ENCODE measurements at regions of chr5 and their contacts with region 1.

Region 1: DNA sequence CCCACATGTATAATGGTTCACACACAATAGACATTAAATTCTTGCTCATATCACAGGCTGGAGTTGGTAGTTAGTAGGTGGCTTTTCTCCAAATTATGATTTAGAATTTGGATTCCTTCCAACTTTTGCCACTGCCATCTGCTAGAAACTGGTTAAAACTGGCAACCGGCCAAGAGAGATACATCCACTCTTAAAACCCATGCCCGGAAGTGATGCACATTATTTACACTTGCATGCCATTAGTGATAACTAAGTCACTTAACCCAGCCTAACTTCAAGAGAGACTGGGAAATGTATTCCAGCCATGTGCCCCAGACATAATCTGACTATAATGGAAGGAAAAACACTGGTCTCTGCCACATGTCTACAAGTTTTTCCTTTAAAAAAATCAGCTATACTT is 395.7 kb upstream of the SEMA6A start:
- DNase-seq: no peak
- H3K4me3 ChIP-seq: no peak overlapping the region
- H3K27ac ChIP-seq: no peak overlapping the region
- H3K4me1 ChIP-seq: no peaks in the 10 kb centered on the region
- H3K27me3 ChIP-seq: no peaks in the 10 kb centered on the region
- CTCF ChIP-seq: no peak

Region 2: GRCh38 chr5:116543499-116543898 is 426.8 kb before region 1 on chr5:
- CTCF ChIA-PET with region 1: no interaction called
- POLR2A ChIA-PET with region 1: no interaction called
- intact Hi-C with region 1: no loop called
- DNase-seq: no peak
- H3K4me3 ChIP-seq: no peak overlapping the region
- H3K27ac ChIP-seq: no peak overlapping the region
- H3K4me1 ChIP-seq: no peaks in the 10 kb centered on the region
- H3K27me3 ChIP-seq: peaks cover 24% of the 10 kb centered on the region
- CTCF ChIP-seq: no peak

Region 3: DNA sequence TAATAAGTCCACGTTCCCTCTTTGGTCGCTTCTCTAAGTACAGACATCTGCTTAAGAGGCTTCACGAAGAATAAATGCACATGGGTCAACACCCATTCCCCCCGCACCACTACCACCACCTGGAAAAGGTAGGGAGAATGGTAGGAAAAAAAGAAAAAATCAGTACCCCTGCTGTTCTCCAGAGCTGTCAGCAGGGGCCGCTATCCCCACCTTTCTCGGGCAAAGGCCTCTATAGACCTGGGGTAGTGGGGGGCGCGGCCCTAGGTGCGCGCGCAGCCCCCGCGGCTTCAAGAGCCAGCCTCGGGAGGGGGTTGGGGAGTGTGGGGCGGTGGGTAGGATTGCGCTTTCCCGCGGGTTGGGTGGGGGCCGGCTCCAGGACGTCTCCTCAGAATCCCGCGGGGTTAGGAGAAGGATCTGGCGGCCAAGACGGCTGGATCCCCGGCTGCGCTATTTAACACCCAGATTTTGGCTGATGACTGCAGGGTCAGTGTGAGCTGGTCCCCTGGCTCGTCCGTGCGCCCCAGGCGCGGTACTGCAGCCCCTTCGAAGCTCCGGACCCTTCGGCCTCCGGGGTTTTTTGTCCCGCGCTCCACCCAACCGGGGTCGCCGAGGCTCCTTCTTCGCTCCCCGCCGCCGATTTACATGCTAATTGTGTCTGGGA is 394.1 kb before region 1 on chr5:
- CTCF ChIA-PET with region 1: no interaction called
- POLR2A ChIA-PET with region 1: no interaction called
- intact Hi-C with region 1: no loop called
- DNase-seq: no peak
- H3K4me3 ChIP-seq: no peak overlapping the region
- H3K27ac ChIP-seq: no peak overlapping the region
- H3K4me1 ChIP-seq: no peaks in the 10 kb centered on the region
- H3K27me3 ChIP-seq: peaks cover 19% of the 10 kb centered on the region
- CTCF ChIP-seq: peak; percentile 37; the same call in 1 of the 2 replicates

Region 4: DNA sequence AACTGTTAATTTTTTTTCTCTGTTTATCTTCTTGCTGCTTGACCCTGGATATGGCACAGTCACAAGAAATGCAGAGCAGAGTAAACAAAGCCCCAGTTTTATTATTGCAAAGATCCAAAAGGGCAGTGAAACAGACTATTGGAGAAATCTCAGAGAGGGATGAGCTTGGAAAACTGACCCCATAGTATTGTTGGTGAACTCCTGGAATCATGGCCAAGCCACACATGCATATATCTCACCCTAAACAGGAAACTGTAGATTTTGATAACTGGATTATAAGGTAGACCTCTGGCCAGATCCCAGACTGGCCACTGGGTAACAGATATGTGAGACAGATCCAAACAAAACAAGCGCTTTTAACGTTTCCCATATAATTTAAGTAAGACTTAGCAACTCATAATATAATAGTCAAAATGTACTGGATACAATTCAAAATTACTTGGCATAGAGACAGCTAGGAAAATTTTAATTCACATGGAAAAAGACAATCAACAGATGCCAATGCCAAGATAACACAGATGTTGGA is 132.2 kb before region 1 on chr5:
- CTCF ChIA-PET with region 1: no interaction called
- POLR2A ChIA-PET with region 1: no interaction called
- intact Hi-C with region 1: no loop called
- DNase-seq: no peak
- H3K4me3 ChIP-seq: no peak overlapping the region
- H3K27ac ChIP-seq: no peak overlapping the region
- H3K4me1 ChIP-seq: no peaks in the 10 kb centered on the region
- H3K27me3 ChIP-seq: 0 out of 2 replicates have a peak, but pooled peaks cover 4% of the 10 kb centered on the region
- CTCF ChIP-seq: no peak

Region 5: DNA sequence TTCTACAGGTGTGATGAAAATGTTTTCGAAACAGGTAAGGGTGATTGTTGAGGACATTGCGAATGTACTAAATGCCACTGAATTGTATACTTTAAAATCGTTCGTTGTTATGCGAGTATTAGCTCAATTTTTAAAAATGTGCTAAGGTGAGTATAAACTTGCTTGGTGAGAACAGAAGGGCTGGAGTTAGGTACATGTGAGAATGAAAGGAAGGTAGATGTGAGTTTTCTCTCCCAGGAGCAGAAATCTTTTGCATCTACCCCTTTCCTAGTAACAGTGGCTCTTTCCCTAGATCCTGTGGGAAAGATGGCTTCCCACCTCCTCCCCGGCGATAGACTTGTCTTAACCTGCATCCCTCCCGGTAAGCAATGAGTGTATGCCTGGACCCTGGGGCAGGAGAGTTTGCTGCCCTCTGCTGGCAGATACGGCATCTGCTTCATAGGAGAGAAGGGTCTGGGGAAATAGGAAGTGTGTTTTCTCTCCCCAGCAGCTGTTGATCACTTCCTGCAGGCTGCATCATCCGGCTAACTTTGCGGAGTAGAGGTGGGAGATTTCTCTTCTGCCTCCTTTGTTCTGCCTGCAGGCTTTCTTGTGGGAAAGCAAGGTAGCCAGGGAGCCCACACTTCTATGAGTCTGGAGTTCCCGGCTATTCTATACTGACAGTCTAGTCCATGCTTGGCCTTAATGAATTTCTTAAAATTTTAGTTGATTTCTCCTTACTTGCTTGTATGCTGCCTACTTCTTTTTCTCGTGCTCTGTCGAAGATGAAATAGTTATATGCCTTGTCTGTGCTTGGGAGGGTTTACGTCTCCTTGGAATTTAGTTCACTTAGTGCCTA is 22.4 kb before region 1 on chr5:
- CTCF ChIA-PET with region 1: no interaction called
- POLR2A ChIA-PET with region 1: no interaction called
- intact Hi-C with region 1: loop called (anchors 2 kb)
- DNase-seq: peak in 1 of 2 experiments; percentile 41
- H3K4me3 ChIP-seq: no peak overlapping the region
- H3K27ac ChIP-seq: no peak overlapping the region
- H3K4me1 ChIP-seq: no peaks in the 10 kb centered on the region
- H3K27me3 ChIP-seq: peaks cover 6% of the 10 kb centered on the region; the same call in 1 of the 2 replicates
- CTCF ChIP-seq: peak; percentile 77

Region 6: GRCh38 chr5:118293378-118293777 is 1323.1 kb after region 1 on chr5:
- CTCF ChIA-PET with region 1: no interaction called
- POLR2A ChIA-PET with region 1: no interaction called
- intact Hi-C with region 1: no loop called
- DNase-seq: no peak
- H3K4me3 ChIP-seq: no peak overlapping the region
- H3K27ac ChIP-seq: no peak overlapping the region
- H3K4me1 ChIP-seq: no peaks in the 10 kb centered on the region
- H3K27me3 ChIP-seq: no peaks in the 10 kb centered on the region
- CTCF ChIP-seq: no peak